IMR-90 (cell line): ENCODE measurements at regions of chr7 and their contacts with region 1.

Region 1: GRCh38 chr7:40329601-40330153 is 194.9 kb downstream of the SUGCT start:
- DNase-seq: peak; percentile 74
- ATAC-seq: peak; percentile 69
- H3K4me3 ChIP-seq: no peak overlapping the region
- H3K27ac ChIP-seq: no peak overlapping the region
- H3K4me1 ChIP-seq: peaks cover 2% of the 10 kb centered on the region; the same call in 1 of the 2 replicates
- H3K27me3 ChIP-seq: no peaks in the 10 kb centered on the region
- CTCF ChIP-seq: peak; percentile 80
- POLR2A ChIP-seq: no peak
- RAD21 ChIP-seq: peak; percentile 95

Region 2: DNA sequence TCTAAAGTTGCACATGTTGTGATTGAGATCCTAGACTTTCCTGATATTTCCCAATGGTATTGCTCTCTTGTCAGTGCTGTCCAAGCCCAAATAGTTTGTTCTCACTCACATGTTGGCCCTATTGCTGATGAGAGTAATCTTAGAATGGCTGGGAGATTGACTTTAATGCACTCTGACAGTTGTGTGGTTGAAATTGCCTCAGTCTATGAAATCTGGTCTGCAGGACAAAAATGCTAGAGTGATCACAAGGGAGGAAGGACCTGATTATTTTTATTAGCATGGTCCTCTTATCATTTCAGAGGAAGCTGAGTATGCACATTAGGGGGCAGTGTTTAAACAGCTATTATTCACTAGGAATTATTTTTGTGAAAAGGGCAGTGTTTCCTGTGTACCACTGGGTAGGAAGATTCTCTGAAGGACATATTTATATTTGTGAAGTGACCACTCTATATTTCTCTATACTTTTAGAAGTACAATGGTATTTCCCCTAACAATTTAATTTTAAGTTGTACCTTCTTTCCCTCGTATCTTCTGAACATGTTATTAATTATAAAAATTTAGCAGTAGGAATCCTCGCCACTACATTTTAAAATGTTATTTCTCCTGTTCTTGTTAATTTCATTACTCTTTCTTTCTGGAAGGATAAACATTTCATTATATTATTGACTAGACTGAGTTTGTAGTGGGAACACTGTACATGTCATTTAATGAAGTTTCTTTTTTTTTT is 130.4 kb before region 1 on chr7:
- CTCF ChIA-PET with region 1: no interaction called
- POLR2A ChIA-PET with region 1: no interaction called
- dilution Hi-C with region 1: no loop called
- in situ Hi-C with region 1: no loop called
- intact Hi-C with region 1: loop called (anchors 1 kb)
- DNase-seq: peak; percentile 63
- ATAC-seq: peak; percentile 79
- H3K4me3 ChIP-seq: no peak overlapping the region
- H3K27ac ChIP-seq: no peak overlapping the region
- H3K4me1 ChIP-seq: peaks cover 11% of the 10 kb centered on the region
- H3K27me3 ChIP-seq: no peaks in the 10 kb centered on the region
- CTCF ChIP-seq: peak; percentile 61
- POLR2A ChIP-seq: no peak
- RAD21 ChIP-seq: peak; percentile 71

Region 3: DNA sequence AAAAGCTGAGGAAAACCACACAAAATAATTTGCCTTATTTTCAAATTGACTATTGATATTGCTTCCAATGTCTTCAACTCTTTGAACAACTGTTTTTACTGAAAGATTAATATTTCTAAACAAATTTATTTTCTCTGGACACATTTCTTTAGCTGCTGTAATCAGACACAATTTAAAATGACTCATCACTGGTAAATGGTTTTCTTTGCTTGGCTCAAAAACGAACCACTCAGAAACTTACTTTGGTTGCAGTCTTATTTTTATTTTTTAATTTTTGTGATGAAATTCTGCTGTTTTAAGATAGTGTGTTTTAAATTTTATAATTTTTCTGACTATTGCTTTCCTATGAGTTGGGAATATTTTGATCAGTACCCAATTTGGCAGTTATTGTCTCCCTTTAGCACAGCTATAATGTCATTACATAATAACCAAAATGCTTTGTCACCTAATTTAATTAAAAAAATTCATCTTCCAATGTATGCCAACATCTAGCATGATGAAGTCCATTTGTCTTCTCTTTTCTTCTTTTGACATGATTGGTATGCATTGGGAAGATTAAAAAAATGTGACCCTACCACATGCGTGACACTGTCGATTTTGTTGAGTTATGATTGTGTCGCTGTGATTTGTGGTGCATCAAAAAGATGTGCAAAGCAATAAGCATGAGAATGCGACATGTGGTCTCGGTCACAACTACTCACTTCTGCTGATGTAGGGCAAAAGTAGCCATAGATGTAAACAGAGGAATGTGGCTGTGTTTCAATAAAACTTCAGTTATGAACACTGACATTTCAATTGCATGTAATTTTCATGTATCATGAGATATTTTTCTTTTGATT is 27.4 kb after region 1 on chr7:
- CTCF ChIA-PET with region 1: no interaction called
- POLR2A ChIA-PET with region 1: no interaction called
- dilution Hi-C with region 1: no loop called
- in situ Hi-C with region 1: no loop called
- intact Hi-C with region 1: no loop called
- DNase-seq: peak; percentile 47
- ATAC-seq: peak; percentile 37
- H3K4me3 ChIP-seq: no peak overlapping the region
- H3K27ac ChIP-seq: no peak overlapping the region
- H3K4me1 ChIP-seq: peaks cover 2% of the 10 kb centered on the region; the same call in 1 of the 2 replicates
- H3K27me3 ChIP-seq: no peaks in the 10 kb centered on the region
- CTCF ChIP-seq: no peak
- POLR2A ChIP-seq: no peak
- RAD21 ChIP-seq: no peak

Region 4: DNA sequence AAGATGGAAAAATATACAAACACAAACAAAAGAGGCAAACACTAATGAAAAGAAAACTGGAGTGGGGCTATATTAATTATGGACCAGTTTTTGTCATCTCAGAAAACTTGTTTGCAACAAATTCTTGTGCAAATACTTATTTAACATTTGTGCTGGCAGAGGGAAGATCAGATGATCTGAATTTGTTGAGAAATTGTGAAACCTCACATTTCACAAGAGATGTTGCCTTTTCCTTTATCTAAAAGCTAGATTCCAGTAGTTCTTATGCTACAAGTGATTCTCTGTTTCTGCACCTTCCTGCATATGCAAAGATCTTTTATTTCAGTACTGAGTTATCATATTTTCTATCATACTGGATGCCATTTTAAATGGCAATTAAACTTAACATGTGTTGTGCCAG is 125.8 kb after region 1 on chr7:
- CTCF ChIA-PET with region 1: no interaction called
- POLR2A ChIA-PET with region 1: no interaction called
- dilution Hi-C with region 1: no loop called
- in situ Hi-C with region 1: no loop called
- intact Hi-C with region 1: no loop called
- DNase-seq: peak; percentile 38
- ATAC-seq: no peak
- H3K4me3 ChIP-seq: no peak overlapping the region
- H3K27ac ChIP-seq: no peak overlapping the region
- H3K4me1 ChIP-seq: no peaks in the 10 kb centered on the region
- H3K27me3 ChIP-seq: no peaks in the 10 kb centered on the region
- CTCF ChIP-seq: no peak
- POLR2A ChIP-seq: no peak
- RAD21 ChIP-seq: no peak

Region 5: DNA sequence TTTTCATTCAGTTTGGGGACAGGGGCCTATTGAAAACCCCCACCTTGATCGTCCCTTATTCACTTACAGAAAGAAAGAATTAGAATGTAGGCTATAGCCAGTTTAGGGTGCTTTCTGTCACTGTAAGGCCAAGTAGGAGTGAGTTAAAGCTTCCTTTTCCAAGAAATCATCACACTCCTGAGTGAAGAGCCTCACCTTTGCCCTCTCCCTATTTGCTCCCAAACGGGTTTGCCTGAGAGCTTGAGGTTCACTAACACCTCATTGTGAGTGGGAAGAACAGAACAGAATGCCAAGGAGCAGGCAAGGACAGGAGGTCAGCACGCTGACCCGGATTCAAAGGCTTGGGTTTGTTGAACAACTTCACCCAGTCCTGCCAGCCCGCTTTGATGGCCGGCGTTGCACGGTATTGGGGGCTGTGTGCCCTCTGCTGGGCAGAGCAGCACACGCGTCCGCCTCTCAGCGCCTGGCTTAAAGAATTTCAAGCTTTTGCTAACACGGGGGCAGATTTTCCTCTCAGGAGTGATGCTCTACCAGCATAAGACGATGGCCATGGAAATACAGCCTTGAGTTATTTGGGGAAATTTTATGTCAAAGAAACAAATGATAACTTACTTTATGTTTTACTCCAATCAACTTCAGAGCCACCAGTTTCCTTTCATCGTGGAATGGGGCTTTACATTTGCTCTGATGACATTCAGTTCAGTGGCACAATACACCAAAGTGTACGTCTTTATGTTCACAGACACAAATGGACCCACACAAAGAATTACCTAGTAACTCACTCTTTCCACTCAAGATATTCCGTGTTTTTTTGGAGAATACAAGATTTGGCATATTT is 275.1 kb after region 1 on chr7:
- CTCF ChIA-PET with region 1: interaction called, 3 read pairs
- POLR2A ChIA-PET with region 1: no interaction called
- dilution Hi-C with region 1: no loop called
- in situ Hi-C with region 1: no loop called
- intact Hi-C with region 1: loop called (anchors 1 kb)
- DNase-seq: peak; percentile 52
- ATAC-seq: peak; percentile 96
- H3K4me3 ChIP-seq: no peak overlapping the region
- H3K27ac ChIP-seq: no peak overlapping the region
- H3K4me1 ChIP-seq: peaks cover 2% of the 10 kb centered on the region; the same call in 1 of the 2 replicates
- H3K27me3 ChIP-seq: no peaks in the 10 kb centered on the region
- CTCF ChIP-seq: peak; percentile 78
- POLR2A ChIP-seq: no peak
- RAD21 ChIP-seq: peak; percentile 83